Activated CD4-positive, alpha-beta T cell treated with anti-CD3 and anti-CD28 coated beads, Interleukin-2, amount 10 ng/mL, durations not matched to agents 7 days and 5 days (primary cell): ENCODE measurements at regions of chr20 and their contacts with region 1.

Region 1: DNA sequence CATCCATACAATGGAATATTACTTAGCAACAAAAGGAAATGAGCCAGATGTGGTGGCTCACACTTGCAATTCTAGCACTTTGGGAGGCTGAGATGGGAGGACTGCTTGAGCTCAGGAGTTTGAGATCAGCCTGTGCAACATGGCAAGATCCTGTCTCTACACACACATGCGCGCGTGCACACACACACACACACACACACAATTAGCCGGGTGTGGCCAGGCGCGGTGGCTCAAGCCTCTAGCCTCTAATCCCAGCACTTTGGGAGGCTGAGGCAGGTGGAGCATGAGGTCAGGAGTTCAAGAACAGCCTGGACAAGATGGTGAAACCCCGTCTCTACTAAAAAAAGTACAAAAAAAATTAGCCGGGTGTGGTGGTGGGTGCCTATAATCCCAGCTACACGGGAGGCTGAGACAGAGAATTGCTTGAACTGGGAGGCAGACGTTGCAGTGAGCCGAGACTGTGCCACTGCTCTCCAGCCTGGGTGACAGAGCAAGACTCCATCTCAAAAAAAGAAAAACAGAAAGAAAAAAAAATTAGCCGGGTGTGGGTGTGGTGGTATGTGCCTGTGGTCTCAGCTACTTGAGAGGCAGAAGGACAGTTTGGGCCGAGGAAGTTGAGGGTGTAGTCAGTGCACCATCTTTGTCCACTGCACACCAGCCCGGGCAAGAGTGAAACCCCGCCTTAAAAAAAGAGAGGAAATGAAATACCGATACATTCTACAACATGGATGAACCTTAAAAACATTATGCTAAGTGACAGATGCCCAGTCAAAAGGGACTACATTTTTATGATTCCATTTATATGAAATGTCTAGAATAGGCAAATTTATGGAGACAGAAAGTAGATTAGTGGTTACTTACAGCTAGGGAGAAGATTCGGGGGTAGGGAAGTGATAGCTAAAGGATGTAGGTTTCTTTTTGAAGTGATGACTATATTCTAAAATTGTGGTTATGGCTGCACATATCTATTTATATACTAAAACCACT is 52.5 kb downstream of the RBL1 start:
- DNase-seq: peak; percentile 66
- H3K4me3 Mint-ChIP-seq: peak overlapping the region; percentile 70
- H3K27ac Mint-ChIP-seq: peak overlapping the region; percentile 98
- H3K4me1 Mint-ChIP-seq: peaks cover 45% of the 10 kb centered on the region
- H3K27me3 Mint-ChIP-seq: no peaks in the 10 kb centered on the region

Region 2: GRCh38 chr20:36950414-36951197 is 92.7 kb before region 1 on chr20:
- CTCF ChIA-PET with region 1: no interaction called
- POLR2A ChIA-PET with region 1: interaction called, 17 read pairs
- DNase-seq: peak; percentile 52
- H3K4me3 Mint-ChIP-seq: peak overlapping the region; percentile 99
- H3K27ac Mint-ChIP-seq: peak overlapping the region; percentile 95
- H3K4me1 Mint-ChIP-seq: peaks cover 44% of the 10 kb centered on the region
- H3K27me3 Mint-ChIP-seq: no peaks in the 10 kb centered on the region

Region 3: GRCh38 chr20:37161830-37162549 is 118.7 kb after region 1 on chr20:
- CTCF ChIA-PET with region 1: no interaction called
- POLR2A ChIA-PET with region 1: no interaction called
- DNase-seq: no peak
- H3K4me3 Mint-ChIP-seq: no peak overlapping the region
- H3K27ac Mint-ChIP-seq: no peak overlapping the region
- H3K4me1 Mint-ChIP-seq: no peaks in the 10 kb centered on the region
- H3K27me3 Mint-ChIP-seq: peaks cover 6% of the 10 kb centered on the region

Region 4: GRCh38 chr20:37202267-37202943 is 159.1 kb after region 1 on chr20:
- CTCF ChIA-PET with region 1: no interaction called
- POLR2A ChIA-PET with region 1: no interaction called
- DNase-seq: peak; percentile 33
- H3K4me3 Mint-ChIP-seq: no peak overlapping the region
- H3K27ac Mint-ChIP-seq: no peak overlapping the region
- H3K4me1 Mint-ChIP-seq: peaks cover 3% of the 10 kb centered on the region
- H3K27me3 Mint-ChIP-seq: no peaks in the 10 kb centered on the region